ENCODE measurements at regions of chr1 and their contacts with region 1.

Region 1: DNA sequence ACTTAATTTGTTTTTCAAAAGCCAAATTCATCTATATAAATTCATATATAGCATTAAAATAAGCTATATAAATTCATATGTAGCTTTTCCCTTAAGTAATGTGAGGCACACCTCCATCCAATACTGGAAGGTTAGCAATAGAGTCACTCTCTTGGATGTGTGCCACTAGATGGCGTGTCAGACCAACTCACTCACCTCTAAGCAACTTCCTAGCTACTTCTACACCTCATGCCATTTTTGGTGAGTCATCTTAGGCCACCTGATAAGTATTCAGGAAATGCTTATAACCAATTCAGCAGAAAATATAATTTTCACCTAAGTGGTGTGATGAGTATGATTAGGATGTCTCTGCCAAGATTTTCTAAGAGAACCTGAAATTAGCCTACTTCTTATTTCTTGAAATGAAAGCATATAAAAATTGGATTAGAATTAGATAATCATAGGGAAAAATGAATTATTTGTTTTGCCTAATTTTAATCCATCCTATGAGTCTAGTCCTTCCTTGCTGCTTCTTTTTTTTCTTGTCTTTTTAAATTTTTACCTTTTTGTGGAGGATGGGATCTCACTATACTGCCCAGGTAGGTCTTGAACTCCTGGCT is 34.4 kb upstream of the TADA1 start:
- DNase-seq: peak; percentile 70
- H3K4me3 Mint-ChIP-seq: no peak overlapping the region
- H3K27ac Mint-ChIP-seq: no peak overlapping the region
- H3K4me1 Mint-ChIP-seq: peaks cover 28% of the 10 kb centered on the region
- H3K27me3 Mint-ChIP-seq: peaks cover 5% of the 10 kb centered on the region

Region 2: DNA sequence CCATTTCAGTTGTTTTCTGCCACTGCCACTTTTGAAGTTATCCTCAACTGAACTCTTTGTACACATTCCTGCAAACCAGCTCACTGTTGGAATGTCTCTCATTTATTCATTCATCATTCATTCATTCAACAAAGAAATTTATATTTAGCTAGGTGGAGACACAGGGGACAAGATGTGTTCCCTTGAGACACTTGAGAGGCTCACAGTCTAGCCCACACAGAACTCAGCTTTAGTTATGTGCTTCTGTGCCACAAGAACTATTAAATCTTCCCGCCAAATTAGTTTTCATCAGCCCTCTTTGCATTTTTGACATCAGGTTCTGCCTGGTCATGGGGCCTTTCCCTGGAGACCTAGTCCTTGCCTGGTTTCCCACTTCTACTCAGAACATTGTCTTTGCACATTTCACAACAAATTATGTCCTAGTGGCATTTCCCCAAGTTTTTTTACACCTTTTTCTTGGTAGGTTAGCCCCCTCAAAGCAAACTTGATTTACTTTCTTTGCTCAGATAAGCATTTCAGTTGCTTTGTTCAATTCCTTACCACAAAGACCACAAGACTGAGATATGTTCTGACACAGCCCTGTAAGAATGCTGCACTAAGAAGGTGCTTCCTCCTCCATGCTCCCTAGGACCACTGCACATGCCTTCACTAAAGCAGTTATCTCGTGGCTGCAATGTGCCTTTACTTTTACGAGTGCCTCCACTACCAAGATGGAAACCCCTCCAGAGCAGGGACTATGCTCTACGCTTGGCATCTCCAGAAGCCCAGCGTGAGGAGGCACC is 33.9 kb after region 1 on chr1:
- intact Hi-C with region 1: loop called (anchors 2 kb)
- DNase-seq: no peak
- H3K4me3 Mint-ChIP-seq: no peak overlapping the region
- H3K27ac Mint-ChIP-seq: no peak overlapping the region
- H3K4me1 Mint-ChIP-seq: peaks cover 16% of the 10 kb centered on the region
- H3K27me3 Mint-ChIP-seq: peaks cover 24% of the 10 kb centered on the region

Region 3: GRCh38 chr1:166975361-166976129 is 65.0 kb after region 1 on chr1 and contains the start of gene ILDR2:
- intact Hi-C with region 1: loop called (anchors 1 kb)
- DNase-seq: peak; percentile 41
- H3K4me3 Mint-ChIP-seq: peak within 1 kb of the TSS; percentile 94
- H3K27ac Mint-ChIP-seq: peak within 1 kb of the TSS; percentile 80
- H3K4me1 Mint-ChIP-seq: peaks cover 58% of the 10 kb centered on the region
- H3K27me3 Mint-ChIP-seq: peaks cover 28% of the 10 kb centered on the region
- total RNA-seq, gene ILDR2: 11.3 and 14.4 TPM in 2 replicates

Region 4: DNA sequence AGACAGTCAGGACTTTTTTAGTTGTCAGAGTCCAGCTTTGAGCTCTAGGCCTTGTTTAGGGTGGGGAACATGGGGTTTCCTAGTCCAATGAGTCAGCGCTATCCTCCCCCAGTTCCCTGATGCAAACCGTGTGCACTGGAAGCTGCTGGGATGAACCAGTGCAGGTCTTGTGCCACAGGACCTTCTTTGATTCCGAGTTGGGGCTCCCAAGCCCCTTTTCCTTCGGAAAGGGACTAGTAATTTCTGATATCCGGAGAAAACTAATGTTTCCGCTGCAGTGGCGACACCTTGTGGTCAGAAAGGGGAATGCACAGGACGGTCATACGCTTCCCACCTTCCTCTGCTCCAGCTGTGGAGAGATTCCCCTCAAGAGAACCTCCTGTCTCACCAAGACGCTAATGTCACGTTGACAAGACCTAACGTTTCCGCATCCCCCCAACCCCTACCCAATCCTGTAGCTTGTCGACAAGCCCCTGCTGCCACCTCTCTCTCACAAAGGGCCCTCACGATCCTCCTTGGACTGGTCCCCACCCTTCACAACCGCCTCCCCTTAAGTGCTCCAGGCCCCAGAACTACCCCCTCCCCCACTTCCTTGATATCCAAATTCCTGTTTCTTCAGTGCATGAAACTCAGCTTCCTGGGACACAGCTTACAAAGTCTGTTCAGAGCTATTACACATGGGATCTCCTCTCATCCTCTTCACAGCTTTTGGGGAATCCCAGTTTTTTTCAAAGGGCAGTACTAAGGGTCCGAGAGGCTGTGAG is 148.7 kb after region 1 on chr1:
- intact Hi-C with region 1: loop called (anchors 1 kb)
- DNase-seq: peak; percentile 60
- H3K4me3 Mint-ChIP-seq: no peak overlapping the region
- H3K27ac Mint-ChIP-seq: no peak overlapping the region
- H3K4me1 Mint-ChIP-seq: peaks cover 8% of the 10 kb centered on the region
- H3K27me3 Mint-ChIP-seq: no peaks in the 10 kb centered on the region

Region 5: GRCh38 chr1:167082511-167083027 is 172.1 kb after region 1 on chr1:
- intact Hi-C with region 1: no loop called
- DNase-seq: no peak
- H3K4me3 Mint-ChIP-seq: no peak overlapping the region
- H3K27ac Mint-ChIP-seq: no peak overlapping the region
- H3K4me1 Mint-ChIP-seq: no peaks in the 10 kb centered on the region
- H3K27me3 Mint-ChIP-seq: peaks cover 9% of the 10 kb centered on the region

Region 6: GRCh38 chr1:167553136-167554027 is 642.9 kb after region 1 on chr1 and contains the start of gene CREG1:
- intact Hi-C with region 1: loop called (anchors 5 kb)
- DNase-seq: peak; percentile 89
- H3K4me3 Mint-ChIP-seq: peak within 1 kb of the TSS; percentile 86
- H3K27ac Mint-ChIP-seq: peak within 1 kb of the TSS; percentile 4
- H3K4me1 Mint-ChIP-seq: peaks cover 40% of the 10 kb centered on the region
- H3K27me3 Mint-ChIP-seq: peaks cover 1% of the 10 kb centered on the region
- total RNA-seq, gene CREG1: 15.3 and 16.8 TPM in 2 replicates

Measured in activated T-helper 1 cell treated with anti-CD3 and anti-CD28 coated beads, Interleukin-12 subunit alpha, Interleukin-12 subunit beta, Interleukin-2, Interleukin-4 antibody, amounts not matched to agents 30 ng/mL and 10 ng/mL and 1 ng/mL, durations not matched to agents 14 hours and 24 hours and 36 hours (primary cell).